Cardiac septum (tissue), 1 donor: ENCODE measurements at regions of chr2 and their contacts with region 1.

Region 1: GRCh38 chr2:85561317-85561979 is at the start of gene GGCX:
- DNase-seq: peak; percentile 98
- total RNA-seq, gene GGCX: 23.3 TPM

Region 2: DNA sequence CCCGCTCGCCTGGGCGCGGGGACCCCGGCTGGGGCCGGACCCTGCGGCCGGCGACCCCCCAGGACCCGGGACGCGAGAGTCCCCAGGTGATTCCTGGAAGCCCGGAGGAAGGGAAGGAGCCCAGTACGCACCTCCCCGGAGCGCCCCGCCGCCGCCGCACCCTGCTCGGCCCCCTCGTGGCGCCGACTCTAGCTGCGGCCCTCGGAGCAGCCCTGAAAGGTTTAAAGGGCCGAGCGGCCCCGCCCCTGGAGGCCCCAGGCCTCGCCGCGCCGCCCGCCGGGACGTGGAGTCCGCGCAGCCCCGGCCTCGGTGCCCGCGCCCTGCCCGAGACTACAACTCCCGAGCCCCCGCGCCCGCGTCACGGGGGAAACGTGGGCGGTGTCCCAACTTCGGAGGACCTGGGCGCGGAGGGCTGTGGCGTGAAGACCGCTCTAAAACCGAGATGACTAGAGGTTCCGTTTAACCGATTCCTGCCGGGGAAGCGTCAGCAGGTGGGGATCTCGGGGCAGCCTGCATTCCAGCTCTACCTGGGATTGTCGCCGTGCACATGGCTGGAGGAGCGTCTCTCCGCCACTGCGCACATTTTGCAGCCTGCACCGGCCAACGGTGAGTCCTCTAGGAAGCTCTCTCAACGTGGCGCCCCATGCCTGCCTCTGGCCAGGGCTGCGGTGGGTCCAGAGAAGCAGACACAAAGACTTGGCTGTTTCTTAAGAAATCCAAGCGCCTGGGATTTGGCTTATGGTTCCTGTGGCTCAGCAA is 41.2 kb after region 1 on chr2 and contains the start of gene TMEM150A:
- intact Hi-C with region 1: loop called (anchors 5 kb)
- DNase-seq: peak; percentile 95
- total RNA-seq, gene TMEM150A: 11.4 TPM

Region 3: GRCh38 chr2:85662899-85663593 is 101.6 kb after region 1 on chr2:
- intact Hi-C with region 1: no loop called
- DNase-seq: peak; percentile 76

Region 4: DNA sequence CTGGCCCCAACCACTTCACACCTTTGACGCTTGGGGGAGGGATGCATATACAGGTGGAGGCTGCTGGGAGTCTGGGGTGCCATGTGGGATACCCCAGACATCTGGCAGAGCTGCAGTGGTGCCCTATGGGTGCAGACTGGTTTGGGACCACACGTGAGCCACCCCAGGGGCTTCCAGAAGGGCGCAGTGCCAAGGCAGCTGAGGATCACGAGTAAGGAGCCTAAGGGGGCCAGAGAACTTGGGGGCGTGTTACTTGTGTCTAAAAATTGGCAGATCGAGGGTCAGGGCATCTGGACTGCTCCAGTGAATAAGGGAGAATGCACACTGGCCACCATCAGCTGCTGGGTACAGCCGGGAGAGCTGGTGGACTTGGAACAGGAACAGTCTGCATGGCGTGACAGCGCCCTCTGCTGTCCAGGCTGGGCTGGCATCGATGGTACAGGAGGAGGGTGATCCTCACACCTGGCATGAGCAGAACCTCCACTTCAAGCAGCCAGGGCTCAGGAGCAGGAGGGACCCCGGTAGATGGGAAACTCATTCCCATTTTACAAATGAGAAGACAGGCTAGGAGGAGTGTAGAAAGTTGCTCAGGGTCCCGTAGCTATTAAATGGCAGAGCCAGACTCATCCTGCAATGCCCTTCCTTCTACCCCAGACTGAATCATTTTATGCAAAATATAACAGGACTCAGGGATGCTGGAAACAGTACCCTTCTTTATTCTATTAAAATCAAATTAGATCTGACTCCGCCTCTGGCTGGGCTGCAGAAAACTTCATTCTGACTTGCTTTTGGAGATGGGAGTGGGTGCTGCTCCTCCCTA is 252.7 kb after region 1 on chr2:
- intact Hi-C with region 1: no loop called
- DNase-seq: peak; percentile 95